GM18951 (cell line): ENCODE measurements at regions of chr4 and their contacts with region 1.

Region 1: DNA sequence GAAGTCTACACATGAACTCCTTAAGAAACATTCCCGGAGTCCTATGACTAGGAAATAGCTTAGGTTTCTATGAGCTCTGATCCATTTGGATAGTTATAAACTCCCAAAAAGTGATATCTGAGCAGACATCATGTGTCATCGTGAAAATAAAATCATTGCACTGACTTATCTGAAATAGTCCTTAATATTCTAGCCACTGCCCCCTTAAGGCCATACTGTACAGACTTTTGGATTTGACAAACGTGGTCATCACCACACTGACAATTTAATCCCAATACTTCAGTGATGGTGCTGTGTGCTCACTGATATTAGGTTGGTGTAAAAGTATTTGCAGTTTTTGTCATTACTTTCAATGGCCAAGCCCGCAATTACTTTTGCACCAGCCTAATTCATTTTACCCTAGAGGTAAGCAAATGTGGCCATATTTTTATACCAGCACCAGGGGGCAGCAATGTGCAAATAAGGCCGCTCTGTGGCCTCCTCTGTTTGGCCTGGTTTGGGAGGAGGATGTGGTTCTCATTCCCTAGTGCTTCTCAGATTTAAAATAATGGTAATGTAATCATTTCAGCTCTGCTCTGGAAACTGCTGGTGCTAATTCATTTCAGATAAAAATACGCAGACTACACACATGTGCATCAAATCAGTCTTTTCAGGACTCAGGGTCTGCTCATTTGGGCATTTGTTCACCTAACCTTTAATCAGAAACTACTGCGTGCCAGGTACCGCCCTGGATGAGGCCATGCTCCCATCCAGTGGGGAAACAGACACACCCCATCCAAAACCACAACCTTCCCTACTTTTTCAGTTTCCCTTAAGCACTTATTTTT is 196.4 kb upstream of the C1QTNF7 start:
- POLR2A ChIP-seq: no peak

Region 2: DNA sequence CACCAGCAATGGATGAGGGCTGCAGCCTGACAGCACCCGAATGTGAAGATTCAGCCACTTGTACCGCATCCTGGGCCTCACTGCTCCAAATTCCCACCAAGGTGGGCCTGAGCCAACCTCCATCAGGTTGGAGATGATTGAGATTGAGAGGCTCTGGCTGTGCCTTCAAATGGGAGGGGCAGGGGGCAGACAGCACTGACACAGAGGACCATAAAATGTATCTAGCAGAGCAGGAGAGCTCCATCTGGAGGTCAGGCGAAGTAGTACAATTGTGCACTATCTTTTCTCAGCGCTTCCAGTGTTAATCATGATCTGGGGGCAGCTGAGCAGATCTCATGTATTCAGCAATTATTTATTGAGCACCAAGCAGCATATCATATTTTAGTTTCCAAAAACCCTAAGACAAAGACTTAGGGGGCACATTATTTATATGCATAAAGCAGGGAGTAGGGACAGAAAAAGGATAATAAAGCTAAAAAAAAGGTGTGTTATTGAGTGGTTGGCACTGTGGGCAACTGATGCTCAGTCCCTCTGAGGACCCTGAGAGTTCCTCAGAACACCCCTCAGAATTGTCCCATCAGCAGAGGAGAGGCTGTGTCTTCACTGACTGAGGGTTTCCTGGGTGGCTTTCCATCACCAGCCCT is 164.8 kb after region 1 on chr4:
- in situ Hi-C with region 1: loop called (anchors 10 kb)
- POLR2A ChIP-seq: no peak

Region 3: GRCh38 chr4:15655229-15656037 is 424.0 kb after region 1 on chr4 and contains the start of gene FBXL5:
- in situ Hi-C with region 1: loop called (anchors 25 kb)
- POLR2A ChIP-seq: peak; percentile 90